ENCODE measurements at regions of chr12 and their contacts with region 1.

Region 1: GRCh38 chr12:67630373-67631088 is 18.0 kb upstream of the DYRK2 start:
- DNase-seq: peak; percentile 78 to 97 (median 91)
- ATAC-seq: peak; percentile 95 to 99
- H3K4me3 Mint-ChIP-seq: peak overlapping the region; percentile 55 to 91 (median 76)
- H3K27ac Mint-ChIP-seq: peak overlapping the region; percentile 84 to 98 (median 96)
- H3K4me1 Mint-ChIP-seq: peaks cover 53 to 95% (median 89%) of the 10 kb centered on the region in 4 donors
- H3K27me3 Mint-ChIP-seq: peaks cover 0 to 2% (median 0%) of the 10 kb centered on the region in 5 donors

Region 2: GRCh38 chr12:67441736-67442346 is 188.7 kb before region 1 on chr12:
- POLR2A ChIA-PET with region 1: interaction called, 12 read pairs
- DNase-seq: peak; percentile 46 to 87 (median 72)
- ATAC-seq: peak; percentile 92 to 99
- H3K4me3 Mint-ChIP-seq: peak overlapping the region; percentile 43 to 80 (median 58)
- H3K27ac Mint-ChIP-seq: peak overlapping the region; percentile 10 to 90 (median 60)
- H3K4me1 Mint-ChIP-seq: peaks cover 20 to 38% (median 26%) of the 10 kb centered on the region in 4 donors
- H3K27me3 Mint-ChIP-seq: no peaks in the 10 kb centered on the region

Region 3: DNA sequence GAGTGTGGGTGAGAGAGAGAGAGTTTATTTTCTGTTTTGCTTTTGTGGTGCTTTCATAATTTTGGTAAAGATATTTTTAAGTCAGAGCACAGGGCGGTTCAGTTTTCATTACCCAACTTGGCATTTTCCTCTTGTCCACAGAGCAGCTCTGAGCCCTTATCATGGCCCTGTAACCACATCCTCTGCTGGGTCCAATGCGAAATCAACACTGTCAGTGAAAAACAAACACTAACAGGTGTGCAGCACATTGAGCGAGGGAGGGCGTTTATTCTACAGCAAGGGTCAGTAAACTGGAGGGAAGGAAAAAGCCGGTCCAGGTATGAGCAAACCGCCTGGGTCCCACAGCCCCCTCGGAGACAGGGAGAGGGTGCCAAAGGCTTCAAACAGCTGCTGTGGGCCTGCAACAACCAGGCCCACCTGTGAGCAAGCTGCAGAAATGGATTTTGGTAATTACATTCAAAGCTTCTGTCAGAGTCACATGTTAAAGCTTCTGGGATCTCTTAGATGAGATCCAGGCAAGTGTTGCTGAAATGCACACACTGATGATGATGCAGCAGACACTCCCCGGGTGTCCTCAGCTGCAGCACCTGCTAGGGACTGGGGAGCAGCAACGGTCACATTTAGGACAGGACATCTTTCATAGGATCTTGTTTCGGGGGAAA is 114.7 kb before region 1 on chr12:
- POLR2A ChIA-PET with region 1: interaction called, 15 read pairs
- DNase-seq: peak in 8 of 10 donors; percentile 5 to 65 (median 31)
- ATAC-seq: peak; percentile 88 to 92
- H3K4me3 Mint-ChIP-seq: peak overlapping the region; percentile 8 to 81 (median 69)
- H3K27ac Mint-ChIP-seq: peak overlapping the region; percentile 70 to 92 (median 84)
- H3K4me1 Mint-ChIP-seq: peaks cover 32 to 60% (median 52%) of the 10 kb centered on the region in 4 donors
- H3K27me3 Mint-ChIP-seq: no peaks in the 10 kb centered on the region

Region 4: GRCh38 chr12:67578976-67579661 is 51.4 kb before region 1 on chr12:
- POLR2A ChIA-PET with region 1: interaction called, 47 read pairs
- DNase-seq: peak in 6 of 10 donors; percentile 27 to 78 (median 64)
- ATAC-seq: peak; percentile 92 to 93
- H3K4me3 Mint-ChIP-seq: peak overlapping the region; percentile 54 to 85 (median 75)
- H3K27ac Mint-ChIP-seq: peak overlapping the region in 8 of 10 donors; percentile 13 to 76 (median 54)
- H3K4me1 Mint-ChIP-seq: peaks cover 33 to 63% (median 52%) of the 10 kb centered on the region in 4 donors
- H3K27me3 Mint-ChIP-seq: no peaks in the 10 kb centered on the region

Region 5: GRCh38 chr12:67617619-67618018 is 12.9 kb before region 1 on chr12:
- POLR2A ChIA-PET with region 1: interaction called, 11 read pairs
- DNase-seq: no peak
- ATAC-seq: no peak
- H3K4me3 Mint-ChIP-seq: no peak overlapping the region
- H3K27ac Mint-ChIP-seq: peak overlapping the region in 2 of 10 donors; percentile 1 to 12
- H3K4me1 Mint-ChIP-seq: peaks cover 11 to 24% (median 14%) of the 10 kb centered on the region in 4 donors
- H3K27me3 Mint-ChIP-seq: no peaks in the 10 kb centered on the region

Region 6: DNA sequence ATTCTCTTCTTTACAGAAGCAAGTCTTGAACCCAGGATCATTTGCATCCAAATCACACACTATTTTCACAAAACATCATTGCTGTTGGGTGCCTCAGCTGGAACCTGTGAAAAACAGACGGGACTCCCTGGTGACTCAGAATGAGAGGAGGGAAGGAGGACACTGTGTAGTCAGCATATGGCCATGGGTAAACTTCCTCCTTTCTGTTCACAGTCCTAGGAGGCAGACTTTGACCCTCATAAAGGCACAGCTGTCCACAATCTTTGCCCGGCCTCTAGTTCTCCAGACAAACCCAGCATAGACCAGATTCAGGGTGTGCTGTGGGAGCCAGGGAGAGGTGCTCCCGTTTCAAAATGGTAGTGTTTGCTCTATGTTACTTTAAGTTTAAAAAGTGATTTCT is 80.1 kb after region 1 on chr12:
- POLR2A ChIA-PET with region 1: no interaction called
- DNase-seq: no peak
- ATAC-seq: no peak
- H3K4me3 Mint-ChIP-seq: no peak overlapping the region
- H3K27ac Mint-ChIP-seq: peak overlapping the region in 1 of 10 donors; percentile 60
- H3K4me1 Mint-ChIP-seq: peaks cover 0 to 9% (median 2%) of the 10 kb centered on the region in 4 donors
- H3K27me3 Mint-ChIP-seq: no peaks in the 10 kb centered on the region

Region 7: DNA sequence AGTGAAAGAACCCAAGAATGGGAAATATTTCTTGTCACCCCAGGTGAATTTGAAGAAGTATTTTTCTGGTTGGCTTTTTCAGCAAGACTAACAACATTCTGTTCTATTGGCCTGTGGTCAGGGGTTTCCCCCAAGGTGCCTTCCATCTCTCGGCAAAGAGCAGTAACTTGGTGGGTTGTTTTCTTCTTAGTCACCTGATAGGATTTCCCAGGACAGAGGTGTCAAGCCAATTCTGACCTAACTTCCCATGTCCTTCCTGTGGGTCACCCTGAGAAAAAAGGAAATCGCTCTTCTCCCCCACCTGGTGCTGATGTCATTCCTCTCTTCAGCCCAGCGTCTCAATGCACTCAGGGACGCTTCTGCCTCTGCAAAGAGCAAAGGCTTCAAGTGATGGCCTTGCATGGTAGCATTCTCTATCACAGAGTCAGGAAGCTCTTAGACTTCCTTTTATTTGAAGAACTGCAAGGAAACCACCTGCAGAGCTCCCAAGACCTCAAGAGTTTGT is 545.1 kb after region 1 on chr12:
- POLR2A ChIA-PET with region 1: interaction called, 10 read pairs
- DNase-seq: peak; percentile 33 to 90 (median 73)
- ATAC-seq: peak; percentile 91 to 94
- H3K4me3 Mint-ChIP-seq: peak overlapping the region; percentile 70 to 85 (median 80)
- H3K27ac Mint-ChIP-seq: peak overlapping the region; percentile 55 to 97 (median 95)
- H3K4me1 Mint-ChIP-seq: peaks cover 35 to 73% (median 62%) of the 10 kb centered on the region in 4 donors
- H3K27me3 Mint-ChIP-seq: no peaks in the 10 kb centered on the region

Measured in naive thymus-derived CD8-positive, alpha-beta T cell (primary cell).